IMR-90 (cell line): ENCODE measurements at regions of chr19 and their contacts with region 1.

Region 1: GRCh38 chr19:44603201-44603950 is 10.0 kb upstream of the IGSF23 start:
- DNase-seq: peak; percentile 99
- ATAC-seq: peak; percentile 83
- H3K4me3 ChIP-seq: no peak overlapping the region
- H3K27ac ChIP-seq: peak overlapping the region; percentile 91
- H3K4me1 ChIP-seq: peaks cover 23% of the 10 kb centered on the region
- H3K27me3 ChIP-seq: no peaks in the 10 kb centered on the region
- CTCF ChIP-seq: no peak
- POLR2A ChIP-seq: no peak
- RAD21 ChIP-seq: no peak

Region 2: DNA sequence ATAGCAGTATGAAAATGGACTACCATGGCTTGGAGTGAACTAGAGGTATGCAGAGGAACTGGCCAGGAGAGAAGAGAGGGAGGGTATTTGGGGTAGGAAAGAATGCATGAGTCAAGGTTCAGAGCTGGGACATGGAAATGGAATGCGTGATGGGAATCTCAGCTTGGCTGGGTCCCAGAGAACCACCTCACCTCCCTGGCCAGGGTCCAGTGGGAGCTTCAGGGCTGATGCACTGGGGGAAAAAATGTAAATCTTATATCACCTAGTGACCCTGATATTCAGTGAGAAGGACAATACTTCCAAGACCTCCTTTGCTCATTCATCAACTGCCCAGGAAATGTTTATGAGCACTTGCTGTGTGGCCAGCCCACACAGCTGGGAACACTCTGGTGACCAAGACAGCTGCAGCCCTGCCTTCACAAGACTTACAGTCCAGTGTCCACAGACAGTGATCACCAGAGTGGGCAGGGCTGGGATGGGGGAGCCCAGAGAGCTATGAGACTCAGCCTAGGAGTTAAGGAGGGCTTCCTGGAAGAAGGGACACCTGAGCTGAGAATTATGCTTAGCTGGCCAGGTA is 22.8 kb after region 1 on chr19:
- CTCF ChIA-PET with region 1: no interaction called
- POLR2A ChIA-PET with region 1: interaction called, 9 read pairs
- dilution Hi-C with region 1: no loop called
- in situ Hi-C with region 1: no loop called
- intact Hi-C with region 1: loop called (anchors 1 kb)
- DNase-seq: peak; percentile 99
- ATAC-seq: peak; percentile 90
- H3K4me3 ChIP-seq: no peak overlapping the region
- H3K27ac ChIP-seq: peak overlapping the region; percentile 89
- H3K4me1 ChIP-seq: peaks cover 15% of the 10 kb centered on the region
- H3K27me3 ChIP-seq: no peaks in the 10 kb centered on the region
- CTCF ChIP-seq: no peak
- POLR2A ChIP-seq: no peak
- RAD21 ChIP-seq: 0 out of 2 replicates have a peak, but pooled peaks have one; percentile 11

Region 3: DNA sequence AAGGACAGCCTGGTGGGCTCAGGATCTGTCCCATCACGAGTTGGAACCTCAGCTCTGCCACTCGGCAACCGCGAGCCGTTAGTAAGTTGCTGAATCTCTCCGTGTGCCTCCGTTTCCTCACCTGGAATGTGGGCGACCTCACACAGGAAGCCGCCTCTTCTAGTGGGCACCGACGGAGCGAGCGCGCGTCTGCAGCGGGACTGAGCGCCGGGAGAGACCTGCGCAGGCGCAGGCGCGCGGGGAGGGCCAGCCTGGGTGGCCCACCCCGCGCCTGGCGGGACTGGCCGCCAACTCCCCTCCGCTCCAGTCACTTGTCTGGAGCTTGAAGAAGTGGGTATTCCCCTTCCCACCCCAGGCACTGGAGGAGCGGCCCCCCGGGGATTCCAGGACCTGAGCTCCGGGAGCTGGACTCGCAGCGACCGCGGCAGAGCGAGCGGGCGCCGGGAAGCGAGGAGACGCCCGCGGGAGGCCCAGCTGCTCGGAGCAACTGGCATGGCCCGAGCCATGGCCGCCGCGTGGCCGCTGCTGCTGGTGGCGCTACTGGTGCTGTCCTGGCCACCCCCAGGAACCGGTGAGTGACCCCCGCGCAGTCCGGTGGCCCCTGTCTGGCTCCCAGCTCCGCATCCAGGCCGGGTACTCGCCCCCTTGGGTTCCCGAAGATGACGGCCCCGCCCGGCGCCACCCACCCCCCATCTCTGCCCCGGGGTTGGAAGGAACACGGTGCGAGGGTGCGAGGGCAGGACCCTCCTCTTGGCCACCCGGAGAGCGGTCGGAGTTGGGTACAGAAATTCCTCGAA is 40.4 kb after region 1 on chr19 and contains the start of gene PVR:
- CTCF ChIA-PET with region 1: no interaction called
- POLR2A ChIA-PET with region 1: interaction called, 4 read pairs
- dilution Hi-C with region 1: no loop called
- in situ Hi-C with region 1: no loop called
- intact Hi-C with region 1: loop called (anchors 5 kb)
- DNase-seq: peak; percentile 77
- ATAC-seq: peak; percentile 92
- H3K4me3 ChIP-seq: peak within 1 kb of the TSS; percentile 77
- H3K27ac ChIP-seq: peak within 1 kb of the TSS; percentile 91
- H3K4me1 ChIP-seq: peaks cover 14% of the 10 kb centered on the region
- H3K27me3 ChIP-seq: no peaks in the 10 kb centered on the region
- CTCF ChIP-seq: no peak
- POLR2A ChIP-seq: peak; percentile 83
- RAD21 ChIP-seq: no peak
- total RNA-seq, gene PVR: 93.0 and 106 TPM in 2 replicates